ENCODE measurements at regions of chr2 and their contacts with region 1.

Region 1: DNA sequence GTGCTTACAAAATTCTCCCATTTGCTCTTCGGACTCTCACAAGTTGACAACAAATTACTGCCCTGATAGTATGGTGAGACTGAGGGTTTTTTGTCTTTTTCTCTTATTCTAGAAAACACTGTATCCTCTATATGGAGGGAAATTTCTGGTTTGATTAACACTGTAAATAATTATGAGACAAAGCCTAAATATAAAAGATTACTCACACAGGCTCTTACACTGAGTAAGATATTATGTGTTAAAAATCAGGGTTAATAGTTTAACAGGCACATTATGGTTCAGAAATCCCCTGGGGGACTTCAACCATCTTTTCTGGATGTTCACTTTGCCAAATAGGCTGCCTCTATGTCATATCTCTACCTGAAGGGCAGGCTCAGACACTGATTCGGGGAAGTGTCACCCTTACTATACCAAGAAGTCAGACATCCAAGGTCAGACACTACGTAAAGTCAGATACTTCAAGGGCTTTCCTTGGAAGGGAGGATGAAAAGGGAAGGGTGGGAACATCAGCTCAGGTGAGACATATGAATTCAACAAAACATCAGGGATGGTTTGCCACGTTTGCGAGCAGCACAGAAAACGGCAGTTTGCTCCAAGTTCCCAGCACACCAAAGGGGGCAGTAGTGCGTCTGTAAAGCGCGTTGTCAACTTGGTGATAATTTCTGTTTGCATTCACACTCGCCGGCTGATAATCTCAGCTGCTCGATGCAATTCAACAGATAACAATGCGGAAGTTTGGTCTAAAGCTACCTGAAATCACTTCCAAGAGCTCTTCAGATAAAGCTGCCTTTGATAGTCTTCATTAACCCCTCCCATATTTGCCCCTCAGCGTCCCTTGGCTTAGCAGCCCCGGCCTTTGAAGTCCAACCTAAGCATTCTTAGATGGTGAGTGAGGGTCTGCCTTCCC is 972 bp upstream of the RASGRP3 start:
- DNase-seq: peak; percentile 94
- ATAC-seq: peak; percentile 60
- H3K4me3 ChIP-seq: peak overlapping the region; percentile 68 to 98 (median 83)
- H3K4me3 Mint-ChIP-seq: peak overlapping the region; percentile 95
- H3K27ac ChIP-seq: peak overlapping the region; percentile 92 to 97
- H3K27ac Mint-ChIP-seq: peak overlapping the region; percentile 98
- H3K4me1 ChIP-seq: peaks cover 32% of the 10 kb centered on the region in 2 donors
- H3K4me1 Mint-ChIP-seq: peaks cover 42% of the 10 kb centered on the region
- H3K27me3 ChIP-seq: no peaks in the 10 kb centered on the region
- H3K27me3 Mint-ChIP-seq: no peaks in the 10 kb centered on the region
- CTCF ChIP-seq: peak; percentile 88

Region 2: GRCh38 chr2:32063310-32064161 is 1411.9 kb before region 1 on chr2 and contains the start of gene SPAST:
- CTCF ChIA-PET with region 1: no interaction called
- POLR2A ChIA-PET with region 1: no interaction called
- intact Hi-C with region 1: loop called (anchors 5 kb)
- DNase-seq: peak; percentile 99
- ATAC-seq: peak; percentile 90
- H3K4me3 ChIP-seq: peak within 1 kb of the TSS; percentile 83 to 96 (median 89)
- H3K4me3 Mint-ChIP-seq: peak within 1 kb of the TSS; percentile 99
- H3K27ac ChIP-seq: peak within 1 kb of the TSS; percentile 71 to 78
- H3K27ac Mint-ChIP-seq: peak within 1 kb of the TSS; percentile 97
- H3K4me1 ChIP-seq: peaks cover 12 to 21% of the 10 kb centered on the region in 2 donors
- H3K4me1 Mint-ChIP-seq: peaks cover 32% of the 10 kb centered on the region
- H3K27me3 ChIP-seq: no peaks in the 10 kb centered on the region
- H3K27me3 Mint-ChIP-seq: no peaks in the 10 kb centered on the region
- CTCF ChIP-seq: peak; percentile 47
- total RNA-seq, gene SPAST: 26.8 and 28.9 TPM in 2 replicates

Region 3: GRCh38 chr2:32627814-32628579 is 847.5 kb before region 1 on chr2 and contains the start of gene TTC27:
- CTCF ChIA-PET with region 1: interaction called, 7 read pairs
- POLR2A ChIA-PET with region 1: interaction called, 4 read pairs
- intact Hi-C with region 1: loop called (anchors 5 kb)
- DNase-seq: peak; percentile 94
- ATAC-seq: peak; percentile 100
- H3K4me3 ChIP-seq: peak within 1 kb of the TSS; percentile 75 to 97 (median 80)
- H3K4me3 Mint-ChIP-seq: peak within 1 kb of the TSS; percentile 96
- H3K27ac ChIP-seq: peak within 1 kb of the TSS; percentile 39 to 66
- H3K27ac Mint-ChIP-seq: peak within 1 kb of the TSS; percentile 82
- H3K4me1 ChIP-seq: peaks cover 4 to 17% of the 10 kb centered on the region in 2 donors
- H3K4me1 Mint-ChIP-seq: peaks cover 18% of the 10 kb centered on the region
- H3K27me3 ChIP-seq: no peaks in the 10 kb centered on the region
- H3K27me3 Mint-ChIP-seq: no peaks in the 10 kb centered on the region
- CTCF ChIP-seq: no peak
- total RNA-seq, gene TTC27: 25.8 and 28.5 TPM in 2 replicates

Region 4: DNA sequence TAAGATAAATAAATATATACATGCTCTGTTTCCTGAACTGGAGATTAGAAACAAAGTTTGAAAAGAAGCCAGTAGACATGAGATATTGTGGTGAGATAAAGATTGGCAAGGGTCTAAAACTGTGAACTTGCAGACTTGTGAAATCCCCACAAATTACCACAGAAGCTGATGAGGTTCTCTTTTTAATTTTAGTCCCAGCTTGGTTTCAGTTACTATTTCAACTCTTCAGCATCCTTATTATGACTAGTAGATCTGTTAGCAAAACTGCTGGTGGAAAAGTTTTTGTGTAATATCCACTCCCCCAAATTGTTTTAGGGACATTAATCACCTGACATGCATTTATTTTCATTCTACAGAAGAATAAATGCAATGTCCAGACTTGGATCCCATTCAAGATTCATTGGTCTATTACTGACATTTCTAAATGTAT is 21.8 kb after region 1 on chr2:
- CTCF ChIA-PET with region 1: interaction called, 78 read pairs
- POLR2A ChIA-PET with region 1: interaction called, 23 read pairs
- intact Hi-C with region 1: loop called (anchors 1 kb)
- DNase-seq: peak; percentile 71
- ATAC-seq: peak; percentile 44
- H3K4me3 ChIP-seq: peak overlapping the region in 1 of 5 experiments; percentile 29
- H3K4me3 Mint-ChIP-seq: peak overlapping the region; percentile 65
- H3K27ac ChIP-seq: peak overlapping the region; percentile 73 to 85
- H3K27ac Mint-ChIP-seq: peak overlapping the region; percentile 84
- H3K4me1 ChIP-seq: peaks cover 89 to 92% of the 10 kb centered on the region in 2 donors
- H3K4me1 Mint-ChIP-seq: peaks cover 90% of the 10 kb centered on the region
- H3K27me3 ChIP-seq: no peaks in the 10 kb centered on the region
- H3K27me3 Mint-ChIP-seq: no peaks in the 10 kb centered on the region
- CTCF ChIP-seq: no peak

Region 5: GRCh38 chr2:33529771-33530351 is 54.4 kb after region 1 on chr2:
- CTCF ChIA-PET with region 1: interaction called, 14 read pairs
- POLR2A ChIA-PET with region 1: interaction called, 4 read pairs
- intact Hi-C with region 1: loop called (anchors 1 kb)
- DNase-seq: peak; percentile 36
- ATAC-seq: peak; percentile 37
- H3K4me3 ChIP-seq: peak overlapping the region in 1 of 5 experiments; percentile 56
- H3K4me3 Mint-ChIP-seq: peak overlapping the region; percentile 72
- H3K27ac ChIP-seq: peak overlapping the region; percentile 98 to 99
- H3K27ac Mint-ChIP-seq: peak overlapping the region; percentile 95
- H3K4me1 ChIP-seq: peaks cover 72 to 77% of the 10 kb centered on the region in 2 donors
- H3K4me1 Mint-ChIP-seq: peaks cover 79% of the 10 kb centered on the region
- H3K27me3 ChIP-seq: no peaks in the 10 kb centered on the region
- H3K27me3 Mint-ChIP-seq: no peaks in the 10 kb centered on the region
- CTCF ChIP-seq: no peak

Region 6: DNA sequence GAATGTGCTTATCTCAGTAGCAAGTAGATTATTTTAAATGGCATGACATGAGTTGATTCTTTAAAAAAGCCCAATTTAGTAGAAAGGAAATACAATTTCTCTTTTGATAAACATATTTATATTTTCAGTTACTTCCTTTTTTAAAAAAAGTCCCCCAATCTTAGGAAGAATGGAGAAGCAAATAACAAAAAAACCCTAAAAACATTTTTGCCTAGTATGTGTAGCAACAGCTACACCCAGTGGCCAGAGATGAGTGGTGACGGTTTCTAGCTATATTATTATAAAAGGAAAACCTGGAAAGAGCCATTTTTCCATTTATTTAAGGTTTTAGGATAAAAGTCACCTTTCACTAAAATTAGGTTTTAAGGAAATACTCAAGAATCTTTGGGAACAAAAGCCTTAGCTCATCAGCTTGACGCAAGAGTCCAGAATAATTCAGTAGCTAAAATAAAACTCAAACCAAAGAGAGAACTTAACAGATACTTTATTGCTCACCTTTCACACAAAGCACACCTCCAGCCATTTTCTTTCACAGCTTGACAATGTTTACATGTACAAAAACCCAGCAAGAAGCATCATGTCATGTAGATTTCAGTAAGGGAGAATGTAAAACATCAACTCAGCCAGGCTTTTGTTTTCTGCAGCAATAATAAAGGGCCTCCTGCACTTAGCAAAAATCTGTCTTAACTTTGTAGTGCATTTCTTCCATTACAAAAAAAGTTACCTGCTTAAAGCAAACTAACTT is 107.9 kb after region 1 on chr2:
- CTCF ChIA-PET with region 1: interaction called, 62 read pairs
- POLR2A ChIA-PET with region 1: interaction called, 5 read pairs
- intact Hi-C with region 1: loop called (anchors 1 kb)
- DNase-seq: peak; percentile 75
- ATAC-seq: peak; percentile 69
- H3K4me3 ChIP-seq: peak overlapping the region in 1 of 5 experiments; percentile 2
- H3K4me3 Mint-ChIP-seq: no peak overlapping the region
- H3K27ac ChIP-seq: peak overlapping the region; percentile 31 to 81
- H3K27ac Mint-ChIP-seq: peak overlapping the region; percentile 72
- H3K4me1 ChIP-seq: peaks cover 9 to 22% of the 10 kb centered on the region in 2 donors
- H3K4me1 Mint-ChIP-seq: peaks cover 17% of the 10 kb centered on the region
- H3K27me3 ChIP-seq: no peaks in the 10 kb centered on the region
- H3K27me3 Mint-ChIP-seq: no peaks in the 10 kb centered on the region
- CTCF ChIP-seq: peak; percentile 98